ENCODE measurements at regions of chr11 and their contacts with region 1.

Region 1: DNA sequence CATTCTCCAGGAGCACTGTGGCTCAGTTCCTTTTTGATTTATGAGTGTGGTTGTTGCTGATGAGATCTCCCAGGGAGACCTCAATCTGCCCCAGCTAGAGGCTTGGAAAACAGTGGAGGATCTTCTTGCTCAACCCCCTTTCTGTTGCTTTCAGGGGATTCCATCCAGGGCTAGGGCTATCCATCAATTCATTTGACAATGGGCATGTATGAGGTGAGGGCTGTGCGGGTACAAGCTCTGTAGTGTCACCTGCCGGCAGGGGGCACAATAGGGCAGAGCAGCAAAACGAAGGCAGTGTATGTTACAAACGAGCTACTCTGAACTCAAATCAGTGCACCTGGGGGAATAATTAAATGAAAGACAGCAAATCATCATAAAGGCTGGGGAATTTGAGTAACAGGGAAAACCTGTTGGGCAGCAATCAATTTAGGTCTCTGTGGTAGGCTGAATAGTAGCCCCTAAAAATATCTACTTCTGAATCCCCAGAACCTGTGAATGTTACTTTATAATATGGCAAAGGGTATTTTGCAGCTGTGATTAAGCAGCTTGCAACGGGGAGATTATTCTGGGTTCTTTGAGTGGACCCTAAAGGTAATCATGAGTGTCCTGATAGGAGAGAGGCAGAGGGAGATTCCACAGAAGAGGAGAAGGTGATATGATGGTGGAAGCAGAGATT is 170.3 kb upstream of the ZBED5 start:
- DNase-seq: peak; percentile 51 to 84 (median 75)
- ATAC-seq: peak; percentile 83 to 93 (median 87)
- H3K4me3 ChIP-seq: no peak overlapping the region
- H3K4me3 Mint-ChIP-seq: no peak overlapping the region
- H3K27ac ChIP-seq: no peak overlapping the region
- H3K27ac Mint-ChIP-seq: no peak overlapping the region
- H3K4me1 ChIP-seq: no peaks in the 10 kb centered on the region
- H3K4me1 Mint-ChIP-seq: peaks cover 0 to 10% (median 3%) of the 10 kb centered on the region in 3 donors
- H3K27me3 ChIP-seq: no peaks in the 10 kb centered on the region
- H3K27me3 Mint-ChIP-seq: peaks cover 0 to 2% of the 10 kb centered on the region in 2 donors

Region 2: DNA sequence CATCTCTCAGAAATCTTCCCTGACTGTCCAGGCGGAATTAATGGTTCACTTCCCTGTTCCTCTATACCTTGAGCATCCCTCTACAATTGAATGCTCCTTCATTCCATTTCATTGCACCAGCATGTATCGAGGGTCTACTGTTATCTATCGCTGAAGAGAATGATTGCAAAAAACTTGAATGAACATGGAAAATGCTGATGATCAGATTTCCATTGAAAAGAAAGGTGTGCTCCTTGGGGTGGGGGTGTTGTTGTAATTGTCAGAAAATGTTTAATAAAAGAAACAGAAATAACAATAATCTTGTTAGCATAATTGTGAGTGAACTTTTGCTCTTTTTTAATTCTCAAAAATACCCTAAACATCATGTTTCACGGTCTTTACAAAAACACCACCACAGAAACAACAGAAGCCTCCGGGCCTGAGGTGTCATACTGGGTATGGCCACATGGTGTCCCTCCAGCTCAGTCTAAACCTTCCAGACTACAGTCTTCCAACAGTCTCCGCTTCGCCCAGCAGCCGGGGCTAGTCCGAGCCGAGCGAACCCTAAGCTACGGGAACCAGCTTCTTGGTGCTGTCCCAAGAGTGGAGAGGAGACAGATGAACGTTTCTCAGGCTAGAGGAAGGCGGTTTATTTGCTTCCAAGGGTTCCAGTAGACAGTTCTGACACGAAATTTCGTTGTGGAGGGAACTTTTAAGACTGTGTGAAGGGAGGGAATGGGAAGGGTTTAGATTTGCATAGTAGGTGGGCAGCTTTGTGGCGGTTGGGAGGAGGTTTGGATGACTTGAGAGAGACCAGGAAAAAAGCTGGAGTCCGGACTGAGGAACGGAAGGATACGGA is 94.5 kb before region 1 on chr11:
- CTCF ChIA-PET with region 1: interaction called, 9 to 17 read pairs
- POLR2A ChIA-PET with region 1: no interaction called
- DNase-seq: peak; percentile 48 to 89 (median 74)
- ATAC-seq: peak; percentile 81 to 89 (median 84)
- H3K4me3 ChIP-seq: peak overlapping the region; percentile 42 to 83
- H3K4me3 Mint-ChIP-seq: peak overlapping the region; percentile 80 to 88 (median 87)
- H3K27ac ChIP-seq: no peak overlapping the region
- H3K27ac Mint-ChIP-seq: peak overlapping the region; percentile 49 to 50
- H3K4me1 ChIP-seq: peaks cover 4 to 22% of the 10 kb centered on the region in 2 experiments
- H3K4me1 Mint-ChIP-seq: peaks cover 21 to 29% (median 22%) of the 10 kb centered on the region in 3 donors
- H3K27me3 ChIP-seq: peaks cover 4 to 43% of the 10 kb centered on the region in 2 experiments
- H3K27me3 Mint-ChIP-seq: peaks cover 27 to 28% of the 10 kb centered on the region in 2 donors

Region 3: GRCh38 chr11:11016068-11016467 is 12.1 kb before region 1 on chr11:
- CTCF ChIA-PET with region 1: interaction called, 4 to 16 read pairs
- POLR2A ChIA-PET with region 1: no interaction called
- DNase-seq: no peak
- ATAC-seq: peak in 1 of 4 experiments; percentile 50
- H3K4me3 ChIP-seq: no peak overlapping the region
- H3K4me3 Mint-ChIP-seq: no peak overlapping the region
- H3K27ac ChIP-seq: no peak overlapping the region
- H3K27ac Mint-ChIP-seq: no peak overlapping the region
- H3K4me1 ChIP-seq: no peaks in the 10 kb centered on the region
- H3K4me1 Mint-ChIP-seq: no peaks in the 10 kb centered on the region
- H3K27me3 ChIP-seq: peaks cover 0 to 3% of the 10 kb centered on the region in 2 experiments
- H3K27me3 Mint-ChIP-seq: peaks cover 6 to 13% of the 10 kb centered on the region in 2 donors

Region 4: DNA sequence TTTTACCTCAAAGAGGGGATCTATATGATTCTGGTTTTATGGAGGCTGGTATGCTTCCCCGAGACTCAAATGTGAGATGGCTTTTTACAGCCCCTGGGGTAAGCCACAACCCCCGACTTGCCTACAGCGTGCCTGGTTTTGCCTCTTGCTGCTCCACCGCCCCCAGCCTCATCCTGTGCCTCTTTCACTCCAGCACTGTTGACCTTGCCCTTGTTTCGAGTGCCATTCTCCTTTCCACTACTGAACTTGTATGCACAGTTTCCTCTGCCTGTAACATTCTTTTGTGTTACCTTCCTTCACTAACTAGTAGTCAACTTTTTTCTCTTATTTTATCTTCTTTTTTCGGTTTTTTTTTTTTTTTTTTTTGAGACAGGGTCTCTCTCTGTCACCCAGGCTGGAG is 48.7 kb after region 1 on chr11:
- CTCF ChIA-PET with region 1: interaction called, 6 to 12 read pairs
- POLR2A ChIA-PET with region 1: no interaction called
- DNase-seq: peak in 1 of 35 experiments; percentile 2
- ATAC-seq: no peak
- H3K4me3 ChIP-seq: no peak overlapping the region
- H3K4me3 Mint-ChIP-seq: no peak overlapping the region
- H3K27ac ChIP-seq: no peak overlapping the region
- H3K27ac Mint-ChIP-seq: peak overlapping the region in 1 of 2 donors; percentile 15
- H3K4me1 ChIP-seq: peaks cover 0 to 19% of the 10 kb centered on the region in 2 experiments
- H3K4me1 Mint-ChIP-seq: peaks cover 23 to 26% (median 24%) of the 10 kb centered on the region in 3 donors
- H3K27me3 ChIP-seq: peaks cover 0 to 2% of the 10 kb centered on the region in 2 experiments
- H3K27me3 Mint-ChIP-seq: peaks cover 4 to 5% of the 10 kb centered on the region in 2 donors

Region 5: GRCh38 chr11:11125618-11126017 is 97.5 kb after region 1 on chr11:
- CTCF ChIA-PET with region 1: no interaction called
- POLR2A ChIA-PET with region 1: no interaction called
- DNase-seq: no peak
- ATAC-seq: no peak
- H3K4me3 ChIP-seq: no peak overlapping the region
- H3K4me3 Mint-ChIP-seq: no peak overlapping the region
- H3K27ac ChIP-seq: no peak overlapping the region
- H3K27ac Mint-ChIP-seq: no peak overlapping the region
- H3K4me1 ChIP-seq: no peaks in the 10 kb centered on the region
- H3K4me1 Mint-ChIP-seq: no peaks in the 10 kb centered on the region
- H3K27me3 ChIP-seq: no peaks in the 10 kb centered on the region
- H3K27me3 Mint-ChIP-seq: peaks cover 7 to 13% of the 10 kb centered on the region in 2 donors

Region 6: GRCh38 chr11:11157185-11157584 is 129.0 kb after region 1 on chr11:
- CTCF ChIA-PET with region 1: interaction called, 48 to 57 read pairs
- POLR2A ChIA-PET with region 1: interaction called in 1 of 2 experiments, 3 read pairs
- DNase-seq: peak; percentile 27 to 79 (median 59)
- ATAC-seq: peak; percentile 56 to 79 (median 64)
- H3K4me3 ChIP-seq: no peak overlapping the region
- H3K4me3 Mint-ChIP-seq: peak overlapping the region in 1 of 3 donors; percentile 74
- H3K27ac ChIP-seq: no peak overlapping the region
- H3K27ac Mint-ChIP-seq: peak overlapping the region; percentile 90 to 92
- H3K4me1 ChIP-seq: peaks cover 6 to 32% of the 10 kb centered on the region in 2 experiments
- H3K4me1 Mint-ChIP-seq: peaks cover 27 to 44% (median 35%) of the 10 kb centered on the region in 3 donors
- H3K27me3 ChIP-seq: no peaks in the 10 kb centered on the region
- H3K27me3 Mint-ChIP-seq: peaks cover 0 to 4% of the 10 kb centered on the region in 2 donors

Region 7: GRCh38 chr11:11787305-11788062 is 759.3 kb after region 1 on chr11:
- CTCF ChIA-PET with region 1: interaction called, 25 to 42 read pairs
- POLR2A ChIA-PET with region 1: no interaction called
- DNase-seq: peak; percentile 32 to 81 (median 63)
- ATAC-seq: peak; percentile 70 to 85 (median 78)
- H3K4me3 ChIP-seq: no peak overlapping the region
- H3K4me3 Mint-ChIP-seq: no peak overlapping the region
- H3K27ac ChIP-seq: no peak overlapping the region
- H3K27ac Mint-ChIP-seq: no peak overlapping the region
- H3K4me1 ChIP-seq: no peaks in the 10 kb centered on the region
- H3K4me1 Mint-ChIP-seq: no peaks in the 10 kb centered on the region
- H3K27me3 ChIP-seq: peaks cover 0 to 9% of the 10 kb centered on the region in 2 experiments
- H3K27me3 Mint-ChIP-seq: peaks cover 6 to 7% of the 10 kb centered on the region in 2 donors

Measured in T-cell (primary cell).